Heart right ventricle (tissue), 16 donors: ENCODE measurements at regions of chr4 and their contacts with region 1.

Region 1: GRCh38 chr4:151055539-151055938 is 40.5 kb upstream of the LRBA start:
- DNase-seq: no peak
- ATAC-seq: no peak
- H3K4me3 ChIP-seq: no peak overlapping the region
- H3K27ac ChIP-seq: no peak overlapping the region
- H3K4me1 ChIP-seq: no peaks in the 10 kb centered on the region
- H3K27me3 ChIP-seq: no peaks in the 10 kb centered on the region
- CTCF ChIP-seq: no peak

Region 2: GRCh38 chr4:151091081-151091480 is 35.5 kb after region 1 on chr4:
- intact Hi-C with region 1: loop called in 1 of 10 experiments (anchors 2 kb)
- DNase-seq: no peak
- ATAC-seq: no peak
- H3K4me3 ChIP-seq: no peak overlapping the region
- H3K27ac ChIP-seq: no peak overlapping the region
- H3K4me1 ChIP-seq: no peaks in the 10 kb centered on the region
- H3K27me3 ChIP-seq: no peaks in the 10 kb centered on the region
- CTCF ChIP-seq: no peak